ENCODE measurements at regions of chr9 and their contacts with region 1.

Region 1: DNA sequence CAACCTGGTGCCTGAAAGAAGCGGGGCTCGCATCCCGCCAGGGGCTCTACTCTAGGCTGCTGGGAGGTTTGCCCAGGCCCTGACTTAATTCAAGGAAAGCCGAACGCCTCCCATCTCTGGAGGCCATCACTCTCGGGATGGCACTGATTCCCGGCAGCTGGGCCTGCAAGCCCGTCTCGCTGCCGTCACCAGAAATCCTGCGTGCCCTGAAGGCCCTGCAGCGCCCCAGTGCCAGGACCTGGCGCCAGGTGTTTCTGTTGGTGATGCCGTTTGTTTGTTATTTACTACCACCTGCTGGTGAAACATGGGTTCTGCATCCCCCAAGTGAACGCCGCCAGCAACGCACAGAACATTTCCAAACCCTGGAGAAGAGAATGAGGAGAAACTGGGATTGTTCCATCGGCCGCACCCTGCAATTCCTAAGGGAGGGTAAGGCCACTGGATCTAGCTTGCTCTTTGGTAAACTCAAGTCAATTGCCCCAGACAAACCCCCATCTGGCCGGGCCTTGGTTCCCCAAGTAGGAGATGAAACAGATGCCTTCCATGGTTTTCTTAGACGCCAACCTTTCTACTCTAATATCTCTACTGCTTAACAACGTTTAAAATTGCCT is 77.9 kb downstream of the AK8 start:
- DNase-seq: peak; percentile 74
- ATAC-seq: peak; percentile 76
- H3K4me3 Mint-ChIP-seq: no peak overlapping the region
- H3K27ac Mint-ChIP-seq: no peak overlapping the region
- H3K4me1 Mint-ChIP-seq: peaks cover 15% of the 10 kb centered on the region
- H3K27me3 Mint-ChIP-seq: peaks cover 48% of the 10 kb centered on the region
- CTCF ChIP-seq: peak; percentile 84

Region 2: GRCh38 chr9:132651254-132651653 is 148.9 kb before region 1 on chr9:
- CTCF ChIA-PET with region 1: no interaction called
- POLR2A ChIA-PET with region 1: no interaction called
- DNase-seq: no peak
- ATAC-seq: no peak
- H3K4me3 Mint-ChIP-seq: no peak overlapping the region
- H3K27ac Mint-ChIP-seq: no peak overlapping the region
- H3K4me1 Mint-ChIP-seq: no peaks in the 10 kb centered on the region
- H3K27me3 Mint-ChIP-seq: no peaks in the 10 kb centered on the region
- CTCF ChIP-seq: no peak

Region 3: GRCh38 chr9:132669698-132670456 is 130.3 kb before region 1 on chr9 and contains the start of gene DDX31:
- CTCF ChIA-PET with region 1: interaction called, 12 read pairs
- POLR2A ChIA-PET with region 1: no interaction called
- DNase-seq: peak; percentile 81
- ATAC-seq: peak; percentile 56
- H3K4me3 Mint-ChIP-seq: peak within 1 kb of the TSS; percentile 91
- H3K27ac Mint-ChIP-seq: peak within 1 kb of the TSS; percentile 91
- H3K4me1 Mint-ChIP-seq: peaks cover 46% of the 10 kb centered on the region
- H3K27me3 Mint-ChIP-seq: no peaks in the 10 kb centered on the region
- CTCF ChIP-seq: no peak
- total RNA-seq, gene DDX31: 24.0 to 26.2 TPM (median 24.7 TPM) in 3 replicates

Region 4: DNA sequence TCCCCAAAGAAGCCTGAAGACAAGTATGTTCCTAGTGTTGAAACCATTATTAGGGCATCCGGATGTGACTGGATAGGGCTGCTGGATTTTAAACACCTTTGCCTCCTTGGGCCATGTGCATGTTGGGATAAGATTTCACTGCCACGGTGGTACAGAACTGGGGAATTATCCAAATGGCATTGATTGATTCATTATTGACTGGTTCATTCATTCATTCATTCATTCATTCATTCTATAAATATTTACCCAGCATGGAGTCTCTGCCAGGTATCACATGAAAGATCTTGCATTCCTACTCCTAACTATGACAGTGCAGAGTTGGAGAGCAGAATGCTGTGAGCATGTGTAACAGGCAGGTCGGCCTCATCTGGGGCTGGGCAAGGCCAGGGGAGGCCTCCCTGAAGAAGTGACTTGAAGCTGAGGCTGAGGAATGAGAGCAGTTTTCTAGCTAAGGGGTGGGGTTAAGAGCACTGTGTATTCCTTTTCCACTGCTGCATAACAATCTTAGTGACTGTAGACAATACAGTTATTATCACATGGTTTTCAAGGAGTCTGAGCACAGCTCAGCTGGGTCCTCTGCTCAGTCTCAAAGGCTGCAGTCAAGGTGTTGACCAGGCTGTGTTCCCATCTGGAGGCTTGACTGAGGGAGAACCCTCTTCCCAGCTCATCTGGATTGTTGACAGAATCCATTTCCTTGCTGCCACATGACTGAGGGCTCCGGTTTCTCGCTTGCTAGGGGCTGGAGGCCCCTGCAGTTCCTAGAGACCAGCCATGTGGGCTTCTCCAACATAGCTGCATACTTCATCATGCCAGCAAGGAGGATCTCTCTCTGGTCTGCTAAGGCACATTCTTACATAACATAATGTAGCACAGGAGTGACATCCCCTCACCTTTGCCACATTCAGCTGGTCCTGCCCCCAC is 42.2 kb after region 1 on chr9:
- CTCF ChIA-PET with region 1: no interaction called
- POLR2A ChIA-PET with region 1: no interaction called
- DNase-seq: no peak
- ATAC-seq: no peak
- H3K4me3 Mint-ChIP-seq: no peak overlapping the region
- H3K27ac Mint-ChIP-seq: no peak overlapping the region
- H3K4me1 Mint-ChIP-seq: peaks cover 6% of the 10 kb centered on the region; the same call in 1 of the 2 replicates
- H3K27me3 Mint-ChIP-seq: no peaks in the 10 kb centered on the region
- CTCF ChIP-seq: no peak

Measured in WTC11 (cell line).